ENCODE measurements at regions of chr2 and their contacts with region 1.

Region 1: GRCh38 chr2:28649481-28650214 is 102.0 kb upstream of the PPP1CB start:
- DNase-seq: no peak
- ATAC-seq: peak; percentile 65
- H3K4me3 Mint-ChIP-seq: no peak overlapping the region
- H3K27ac Mint-ChIP-seq: peak overlapping the region; percentile 27
- H3K4me1 Mint-ChIP-seq: peaks cover 8% of the 10 kb centered on the region
- H3K27me3 Mint-ChIP-seq: peaks cover 4% of the 10 kb centered on the region

Region 2: DNA sequence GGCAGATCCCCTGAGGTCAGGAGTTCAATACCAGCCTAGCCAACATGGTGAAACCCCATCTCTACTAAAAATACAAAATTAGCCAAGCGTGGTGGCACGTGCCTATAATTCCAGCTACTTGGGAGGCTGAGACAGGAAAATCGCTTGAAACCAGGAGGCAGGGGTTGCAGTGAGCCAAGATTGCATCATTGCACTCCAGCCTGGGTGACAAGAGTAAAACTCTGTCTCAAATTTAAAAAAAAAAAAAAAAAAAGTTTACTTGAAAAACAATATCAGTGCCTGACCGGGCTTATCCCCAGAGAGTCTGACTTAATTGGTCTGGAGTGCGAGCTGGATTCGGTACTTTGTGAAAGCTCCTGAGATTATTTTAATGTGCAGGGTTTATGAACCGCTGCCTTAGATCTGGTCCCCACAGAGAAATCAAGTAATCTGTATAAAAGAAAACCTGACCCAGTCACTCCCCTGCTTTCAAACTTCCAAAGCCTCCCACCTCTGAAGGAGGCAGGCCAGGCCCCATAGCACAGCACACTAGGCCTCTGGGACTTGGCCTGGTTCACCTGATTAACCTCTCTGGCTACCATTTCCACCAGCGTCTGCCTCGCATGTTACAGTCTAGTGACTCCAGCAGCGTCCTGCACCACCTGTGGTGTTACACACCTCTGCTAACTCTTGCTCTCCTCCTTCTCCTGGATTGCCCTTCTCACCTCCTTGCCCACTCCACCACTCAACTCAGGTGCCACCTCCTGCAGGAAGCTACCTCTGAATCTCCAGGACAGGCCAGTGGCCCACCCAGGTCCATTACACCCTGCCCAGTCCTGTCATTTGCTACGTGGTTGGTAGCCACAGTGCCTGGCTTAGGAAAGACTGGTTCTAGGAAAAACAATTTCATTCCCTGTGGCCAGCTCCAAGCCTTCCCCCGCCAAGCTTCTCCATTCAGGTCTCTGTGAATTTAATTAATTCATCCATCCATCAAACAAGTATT is 12.3 kb before region 1 on chr2:
- POLR2A ChIA-PET with region 1: interaction called, 10 read pairs
- DNase-seq: no peak
- ATAC-seq: no peak
- H3K4me3 Mint-ChIP-seq: no peak overlapping the region
- H3K27ac Mint-ChIP-seq: no peak overlapping the region
- H3K4me1 Mint-ChIP-seq: peaks cover 9% of the 10 kb centered on the region
- H3K27me3 Mint-ChIP-seq: peaks cover 4% of the 10 kb centered on the region

Measured in activated naive CD8-positive, alpha-beta T cell treated with anti-CD3 and anti-CD28 coated beads, Interleukin-2, amount 10 ng/mL, durations not matched to agents 7 days and 5 days (primary cell).